HepG2 (cell line): ENCODE measurements at regions of chr2 and their contacts with region 1.

Region 1: DNA sequence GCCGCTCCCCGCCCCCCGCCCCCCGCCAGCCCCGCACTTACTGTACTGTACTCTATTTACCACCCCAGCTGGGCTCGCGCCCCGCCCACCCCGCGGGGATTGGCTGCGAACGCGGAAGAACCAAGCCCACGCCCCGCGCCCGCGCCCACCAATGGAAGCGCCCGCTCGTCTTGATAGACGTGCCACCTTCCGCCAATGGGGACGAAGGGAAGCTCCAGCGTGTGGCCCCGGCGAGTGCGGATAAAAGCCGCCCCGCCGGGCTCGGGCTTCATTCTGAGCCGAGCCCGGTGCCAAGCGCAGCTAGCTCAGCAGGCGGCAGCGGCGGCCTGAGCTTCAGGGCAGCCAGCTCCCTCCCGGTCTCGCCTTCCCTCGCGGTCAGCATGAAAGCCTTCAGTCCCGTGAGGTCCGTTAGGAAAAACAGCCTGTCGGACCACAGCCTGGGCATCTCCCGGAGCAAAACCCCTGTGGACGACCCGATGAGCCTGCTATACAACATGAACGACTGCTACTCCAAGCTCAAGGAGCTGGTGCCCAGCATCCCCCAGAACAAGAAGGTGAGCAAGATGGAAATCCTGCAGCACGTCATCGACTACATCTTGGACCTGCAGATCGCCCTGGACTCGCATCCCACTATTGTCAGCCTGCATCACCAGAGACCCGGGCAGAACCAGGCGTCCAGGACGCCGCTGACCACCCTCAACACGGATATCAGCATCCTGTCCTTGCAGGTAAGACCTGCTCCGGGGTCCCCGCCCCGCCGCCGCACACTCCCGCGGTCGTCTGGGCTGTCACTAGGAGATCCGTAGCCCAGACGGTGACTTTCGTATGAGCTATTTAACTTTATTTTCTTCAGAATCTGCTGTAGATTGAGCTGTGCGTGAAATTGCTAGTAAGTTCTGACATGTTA is at the start of gene ID2:
- DNase-seq: peak; percentile 99
- ATAC-seq: peak; percentile 44
- H3K4me3 ChIP-seq: peak within 1 kb of the TSS; percentile 73 to 100 (median 100)
- H3K27ac ChIP-seq: peak within 1 kb of the TSS; percentile 100
- H3K4me1 ChIP-seq: peaks cover 28% of the 10 kb centered on the region
- H3K27me3 ChIP-seq: peaks cover 0 to 8% of the 10 kb centered on the region in 2 experiments; a peak in 1 of 5 replicates
- CTCF ChIP-seq: peak; percentile 29; the same call in 1 of the 2 replicates
- EP300 ChIP-seq: peak in 1 of 2 experiments; percentile 51; a peak in 1 of 4 replicates
- POLR2A ChIP-seq: peak in 1 of 2 experiments; percentile 100; a peak in 2 of 4 replicates
- RAD21 ChIP-seq: peak; percentile 94
- total RNA-seq, gene ID2: 214 and 258 TPM in 2 replicates

Region 2: GRCh38 chr2:7427293-7428060 is 1254.6 kb before region 1 on chr2:
- CTCF ChIA-PET with region 1: no interaction called
- POLR2A ChIA-PET with region 1: interaction called, 5 read pairs
- in situ Hi-C with region 1: loop called (anchors 5 kb)
- intact Hi-C with region 1: no loop called
- DNase-seq: peak; percentile 53
- ATAC-seq: peak; percentile 56
- H3K4me3 ChIP-seq: no peak overlapping the region
- H3K27ac ChIP-seq: no peak overlapping the region
- H3K4me1 ChIP-seq: no peaks in the 10 kb centered on the region
- H3K27me3 ChIP-seq: peaks cover 0 to 14% of the 10 kb centered on the region in 2 experiments; a peak in 2 of 5 replicates
- CTCF ChIP-seq: peak; percentile 85
- EP300 ChIP-seq: no peak
- POLR2A ChIP-seq: no peak
- RAD21 ChIP-seq: peak; percentile 51; the same call in 1 of the 2 replicates

Region 3: DNA sequence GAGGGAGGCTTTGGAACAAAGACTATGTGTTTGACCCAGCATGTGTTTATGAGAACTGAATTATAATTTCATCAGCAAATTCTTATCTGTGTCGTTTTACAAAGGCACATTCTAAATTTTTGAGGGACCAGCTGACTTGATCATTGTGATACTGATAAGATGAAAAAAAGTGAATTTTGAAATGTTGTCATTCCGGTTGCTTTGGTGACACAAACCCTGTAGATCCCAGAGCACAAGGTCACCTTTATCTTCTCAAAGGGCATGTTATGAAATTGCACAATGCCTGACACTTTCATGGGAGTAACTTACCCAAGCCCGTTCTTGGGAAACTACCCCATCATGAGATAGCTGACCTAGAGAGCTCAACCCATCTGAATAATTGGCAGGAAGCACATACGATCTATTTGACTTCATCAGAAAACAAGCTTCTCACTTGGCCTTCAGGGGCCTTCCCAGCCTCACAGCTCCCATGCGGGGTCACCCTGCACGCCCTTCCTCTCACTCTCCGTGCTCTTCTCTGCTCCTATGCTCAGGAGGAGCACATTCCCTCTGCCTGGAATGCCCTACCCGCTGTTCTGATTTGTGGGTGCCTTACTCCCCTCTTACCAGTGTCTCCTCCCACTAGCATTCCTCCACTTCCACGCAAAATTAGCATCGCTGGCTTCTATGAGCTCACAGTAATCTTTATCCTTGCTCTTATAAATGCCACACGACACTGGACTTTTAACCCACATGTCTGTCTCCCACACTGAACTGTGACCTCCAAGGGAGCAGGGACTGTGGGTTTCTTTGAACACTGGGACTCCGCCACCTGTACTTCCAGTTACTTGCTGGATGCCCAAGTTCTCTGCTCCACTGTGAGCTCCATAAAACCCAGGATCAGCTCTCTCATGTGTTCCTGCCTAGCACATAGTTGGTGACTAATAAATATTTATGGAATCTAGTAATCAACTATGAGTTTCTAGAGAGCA is 556.0 kb before region 1 on chr2:
- CTCF ChIA-PET with region 1: no interaction called
- POLR2A ChIA-PET with region 1: interaction called, 51 read pairs
- in situ Hi-C with region 1: no loop called
- intact Hi-C with region 1: loop called (anchors 2 kb)
- DNase-seq: peak; percentile 100
- ATAC-seq: peak; percentile 92
- H3K4me3 ChIP-seq: peak overlapping the region in 2 of 3 experiments; percentile 12 to 60; a peak in 2 of 6 replicates
- H3K27ac ChIP-seq: peak overlapping the region; percentile 100
- H3K4me1 ChIP-seq: peaks cover 67% of the 10 kb centered on the region
- H3K27me3 ChIP-seq: no peaks in the 10 kb centered on the region
- CTCF ChIP-seq: peak; percentile 36
- EP300 ChIP-seq: peak; percentile 100
- POLR2A ChIP-seq: peak; percentile 70 to 94
- RAD21 ChIP-seq: peak; percentile 25; the same call in 1 of the 2 replicates

Region 4: GRCh38 chr2:8525582-8526402 is 156.2 kb before region 1 on chr2:
- CTCF ChIA-PET with region 1: interaction called, 56 read pairs
- POLR2A ChIA-PET with region 1: interaction called, 81 read pairs
- in situ Hi-C with region 1: loop called (anchors 5 kb)
- intact Hi-C with region 1: loop called (anchors 1 kb)
- DNase-seq: peak; percentile 92
- ATAC-seq: peak; percentile 96
- H3K4me3 ChIP-seq: peak overlapping the region; percentile 26 to 64 (median 42)
- H3K27ac ChIP-seq: no peak overlapping the region
- H3K4me1 ChIP-seq: peaks cover 38% of the 10 kb centered on the region
- H3K27me3 ChIP-seq: peaks cover 5 to 33% of the 10 kb centered on the region in 2 experiments; a peak in 4 of 5 replicates
- CTCF ChIP-seq: peak; percentile 97
- EP300 ChIP-seq: peak; percentile 11 to 67; a peak in 2 of 4 replicates
- POLR2A ChIP-seq: no peak
- RAD21 ChIP-seq: peak; percentile 99

Region 5: GRCh38 chr2:8606226-8606625 is 75.8 kb before region 1 on chr2:
- CTCF ChIA-PET with region 1: interaction called, 4 read pairs
- POLR2A ChIA-PET with region 1: interaction called, 206 read pairs
- in situ Hi-C with region 1: no loop called
- intact Hi-C with region 1: loop called (anchors 1 kb)
- DNase-seq: no peak
- ATAC-seq: no peak
- H3K4me3 ChIP-seq: no peak overlapping the region
- H3K27ac ChIP-seq: no peak overlapping the region
- H3K4me1 ChIP-seq: peaks cover 66% of the 10 kb centered on the region
- H3K27me3 ChIP-seq: no peaks in the 10 kb centered on the region
- CTCF ChIP-seq: no peak
- EP300 ChIP-seq: no peak
- POLR2A ChIP-seq: no peak
- RAD21 ChIP-seq: no peak

Region 6: DNA sequence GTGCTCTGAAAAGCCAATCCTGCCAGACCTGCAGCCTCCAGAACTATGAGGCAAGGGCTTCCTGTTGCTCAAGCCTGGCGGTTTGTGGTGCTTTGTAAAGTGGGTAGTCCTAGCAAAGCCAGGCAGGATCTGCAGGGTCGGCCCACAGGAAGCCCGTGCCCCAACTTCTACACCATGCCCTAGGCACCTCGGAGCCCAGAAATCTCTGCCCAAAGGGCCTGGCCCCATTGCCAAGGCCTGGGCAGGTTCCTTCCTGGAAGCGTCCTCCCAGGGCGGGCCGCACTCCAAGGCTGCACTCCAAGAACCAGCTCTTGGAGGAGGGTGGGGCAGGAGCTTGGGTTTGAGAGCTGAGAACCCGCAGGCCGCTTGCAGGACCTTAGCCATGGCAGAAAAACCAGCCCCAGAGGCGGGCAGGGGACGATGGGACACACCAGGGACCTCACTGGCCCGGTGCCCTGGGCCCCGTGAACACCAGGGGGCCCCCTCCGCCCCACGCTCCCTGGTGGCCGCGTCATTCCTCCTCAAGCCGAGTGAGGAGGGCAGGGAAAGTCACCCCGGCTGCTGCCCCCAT is 37.3 kb before region 1 on chr2:
- CTCF ChIA-PET with region 1: no interaction called
- POLR2A ChIA-PET with region 1: interaction called, 188 read pairs
- in situ Hi-C with region 1: no loop called
- intact Hi-C with region 1: no loop called
- DNase-seq: no peak
- ATAC-seq: peak; percentile 19; the same call in 2 of the 3 replicates
- H3K4me3 ChIP-seq: no peak overlapping the region
- H3K27ac ChIP-seq: no peak overlapping the region
- H3K4me1 ChIP-seq: peaks cover 38% of the 10 kb centered on the region
- H3K27me3 ChIP-seq: no peaks in the 10 kb centered on the region
- CTCF ChIP-seq: peak; percentile 41
- EP300 ChIP-seq: no peak
- POLR2A ChIP-seq: no peak
- RAD21 ChIP-seq: no peak

Region 7: GRCh38 chr2:8847400-8847799 is 165.4 kb after region 1 on chr2:
- CTCF ChIA-PET with region 1: no interaction called
- POLR2A ChIA-PET with region 1: no interaction called
- in situ Hi-C with region 1: no loop called
- intact Hi-C with region 1: no loop called
- DNase-seq: no peak
- ATAC-seq: no peak
- H3K4me3 ChIP-seq: no peak overlapping the region
- H3K27ac ChIP-seq: no peak overlapping the region
- H3K4me1 ChIP-seq: peaks cover 19% of the 10 kb centered on the region
- H3K27me3 ChIP-seq: peaks cover 0 to 33% of the 10 kb centered on the region in 2 experiments; a peak in 3 of 5 replicates
- CTCF ChIP-seq: no peak
- EP300 ChIP-seq: no peak
- POLR2A ChIP-seq: no peak
- RAD21 ChIP-seq: no peak

Region 8: DNA sequence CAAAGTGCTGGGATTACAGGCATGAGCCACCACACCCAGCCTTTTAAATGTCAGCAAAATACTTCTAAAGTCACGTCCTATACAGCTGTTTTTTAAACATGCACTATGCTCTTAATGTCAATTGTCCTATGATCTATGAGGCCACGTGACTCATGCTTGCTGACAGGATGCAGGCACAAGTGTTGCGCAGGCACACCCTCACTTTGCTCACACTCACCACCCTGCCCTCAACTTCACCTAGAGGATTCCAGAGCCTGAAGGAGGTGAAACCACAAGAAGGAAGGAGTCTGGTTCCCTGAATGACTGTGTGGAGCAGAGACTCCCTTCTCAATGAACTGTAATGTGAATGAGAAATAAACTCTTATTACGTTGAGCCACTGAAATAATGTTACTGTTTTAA is 224.2 kb after region 1 on chr2:
- CTCF ChIA-PET with region 1: no interaction called
- POLR2A ChIA-PET with region 1: no interaction called
- in situ Hi-C with region 1: no loop called
- intact Hi-C with region 1: no loop called
- DNase-seq: no peak
- ATAC-seq: no peak
- H3K4me3 ChIP-seq: no peak overlapping the region
- H3K27ac ChIP-seq: no peak overlapping the region
- H3K4me1 ChIP-seq: no peaks in the 10 kb centered on the region
- H3K27me3 ChIP-seq: peaks cover 0 to 4% of the 10 kb centered on the region in 2 experiments; a peak in 2 of 5 replicates
- CTCF ChIP-seq: no peak
- EP300 ChIP-seq: no peak
- POLR2A ChIP-seq: no peak
- RAD21 ChIP-seq: no peak